Activated naive CD8-positive, alpha-beta T cell treated with anti-CD3 and anti-CD28 coated beads, Interleukin-2, amount 10 ng/mL, durations not matched to agents 7 days and 5 days (primary cell): ENCODE measurements at regions of chr21 and their contacts with region 1.

Region 1: GRCh38 chr21:33947451-33948095 is 32.0 kb upstream of the ATP5PO start:
- DNase-seq: peak; percentile 70
- ATAC-seq: peak; percentile 65
- H3K4me3 Mint-ChIP-seq: peak overlapping the region; percentile 76
- H3K27ac Mint-ChIP-seq: peak overlapping the region; percentile 98
- H3K4me1 Mint-ChIP-seq: peaks cover 55% of the 10 kb centered on the region
- H3K27me3 Mint-ChIP-seq: no peaks in the 10 kb centered on the region

Region 2: GRCh38 chr21:33931799-33932390 is 15.7 kb before region 1 on chr21:
- POLR2A ChIA-PET with region 1: interaction called, 121 read pairs
- DNase-seq: no peak
- ATAC-seq: no peak
- H3K4me3 Mint-ChIP-seq: peak overlapping the region; percentile 97
- H3K27ac Mint-ChIP-seq: peak overlapping the region; percentile 99
- H3K4me1 Mint-ChIP-seq: peaks cover 34% of the 10 kb centered on the region
- H3K27me3 Mint-ChIP-seq: no peaks in the 10 kb centered on the region

Region 3: DNA sequence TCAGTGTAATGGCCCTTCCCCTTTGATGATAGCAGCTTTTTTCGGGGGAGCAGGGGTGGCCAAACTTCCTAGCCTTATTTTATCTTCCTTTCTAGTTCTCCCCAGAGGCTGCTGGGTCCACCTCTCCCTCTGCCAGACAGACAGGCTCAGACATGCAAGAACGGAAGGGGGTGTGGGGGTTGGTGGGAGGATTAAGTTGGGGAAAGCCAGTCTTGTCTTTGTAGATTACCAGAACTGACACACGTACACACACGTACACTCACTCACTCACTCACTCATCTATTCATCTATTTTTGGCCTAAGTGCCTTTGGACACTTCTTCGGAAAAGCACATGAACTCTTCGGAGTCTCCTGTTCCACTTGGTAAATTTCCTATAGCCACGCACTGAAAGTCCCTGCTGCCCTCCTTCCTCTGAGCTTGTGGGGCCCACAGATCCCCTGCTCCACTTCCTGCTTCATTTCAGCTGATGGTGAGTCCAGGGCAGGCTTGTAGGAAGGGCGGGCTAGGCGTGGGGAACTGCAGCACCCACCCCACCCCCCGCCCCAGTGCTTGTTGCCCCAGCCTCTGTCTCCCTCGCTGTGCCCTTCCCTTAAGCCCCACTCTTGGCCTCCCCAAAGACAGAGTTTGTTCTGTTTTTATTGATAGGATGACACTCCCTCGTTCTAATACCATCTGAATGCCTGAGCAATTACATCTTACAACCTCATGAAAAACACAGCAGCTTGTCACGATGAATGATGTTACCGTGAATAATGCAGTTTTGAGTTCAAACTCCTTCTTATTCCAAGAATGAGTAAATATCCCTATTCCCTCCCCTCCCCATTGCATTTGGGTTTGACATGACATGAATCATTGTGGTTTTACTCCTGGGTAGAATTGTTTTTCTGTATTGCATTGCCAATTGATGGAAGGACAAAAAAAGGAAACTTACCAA is 28.8 kb after region 1 on chr21:
- POLR2A ChIA-PET with region 1: interaction called, 104 read pairs
- DNase-seq: peak; percentile 47
- ATAC-seq: peak; percentile 48
- H3K4me3 Mint-ChIP-seq: peak overlapping the region; percentile 75
- H3K27ac Mint-ChIP-seq: peak overlapping the region; percentile 90
- H3K4me1 Mint-ChIP-seq: peaks cover 58% of the 10 kb centered on the region
- H3K27me3 Mint-ChIP-seq: no peaks in the 10 kb centered on the region

Region 4: DNA sequence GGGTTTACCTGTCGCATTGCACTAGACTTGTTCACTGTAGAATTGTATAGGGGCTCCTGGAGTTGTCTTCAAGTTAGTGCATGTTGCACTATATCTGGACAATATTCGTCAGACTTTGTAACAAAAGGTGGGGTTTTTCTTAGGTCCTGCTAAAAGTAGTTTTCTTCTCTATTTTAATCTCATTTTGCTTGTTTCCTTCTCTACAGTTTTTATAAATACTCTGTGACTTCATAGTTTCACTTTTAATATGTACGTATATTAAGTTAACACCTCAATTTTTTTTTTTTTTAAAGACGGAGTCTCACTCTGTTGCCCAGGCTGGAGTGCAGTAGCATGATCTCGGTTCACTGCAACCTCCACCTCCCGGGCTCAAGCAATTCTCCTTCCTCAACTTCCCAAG is 99.3 kb after region 1 on chr21:
- POLR2A ChIA-PET with region 1: no interaction called
- DNase-seq: no peak
- ATAC-seq: no peak
- H3K4me3 Mint-ChIP-seq: no peak overlapping the region
- H3K27ac Mint-ChIP-seq: no peak overlapping the region
- H3K4me1 Mint-ChIP-seq: peaks cover 3% of the 10 kb centered on the region
- H3K27me3 Mint-ChIP-seq: no peaks in the 10 kb centered on the region

Region 5: GRCh38 chr21:34073032-34073869 is 125.7 kb after region 1 on chr21 and contains the starts of genes MRPS6 and SLC5A3:
- POLR2A ChIA-PET with region 1: interaction called, 52 read pairs
- DNase-seq: peak; percentile 86
- ATAC-seq: peak; percentile 68
- H3K4me3 Mint-ChIP-seq: peak within 1 kb of the TSS; percentile 90
- H3K27ac Mint-ChIP-seq: peak within 1 kb of the TSS; percentile 78
- H3K4me1 Mint-ChIP-seq: peaks cover 39% of the 10 kb centered on the region
- H3K27me3 Mint-ChIP-seq: peaks cover 7% of the 10 kb centered on the region
- total RNA-seq, gene MRPS6: 75.7 to 77.2 TPM
- total RNA-seq, gene SLC5A3: 22.3 to 23.7 TPM

Region 6: DNA sequence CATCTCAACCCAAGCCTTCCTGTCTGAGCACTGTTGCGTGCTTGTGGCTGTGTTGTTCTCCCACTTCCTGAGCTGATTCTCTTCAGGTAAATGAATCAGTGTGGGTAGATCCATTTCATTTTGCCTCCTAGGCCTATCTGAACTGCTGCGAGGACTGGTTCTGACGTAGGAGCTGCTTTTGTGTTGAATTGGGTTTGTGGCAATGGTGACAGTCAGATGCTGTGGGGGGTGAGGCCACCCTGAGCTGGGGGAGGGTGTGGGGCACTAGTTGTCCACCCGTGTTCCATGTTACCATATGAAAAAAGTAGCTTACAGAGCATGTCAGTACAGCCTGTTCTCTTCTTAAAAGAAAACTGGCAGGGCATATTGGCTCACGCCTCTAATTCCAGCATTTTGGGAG is 207.3 kb after region 1 on chr21:
- POLR2A ChIA-PET with region 1: interaction called, 18 read pairs
- DNase-seq: peak; percentile 60
- ATAC-seq: peak; percentile 93
- H3K4me3 Mint-ChIP-seq: peak overlapping the region; percentile 54
- H3K27ac Mint-ChIP-seq: peak overlapping the region; percentile 85
- H3K4me1 Mint-ChIP-seq: peaks cover 45% of the 10 kb centered on the region
- H3K27me3 Mint-ChIP-seq: no peaks in the 10 kb centered on the region